OCI-LY7 (cell line): ENCODE measurements at regions of chr3 and their contacts with region 1.

Region 1: DNA sequence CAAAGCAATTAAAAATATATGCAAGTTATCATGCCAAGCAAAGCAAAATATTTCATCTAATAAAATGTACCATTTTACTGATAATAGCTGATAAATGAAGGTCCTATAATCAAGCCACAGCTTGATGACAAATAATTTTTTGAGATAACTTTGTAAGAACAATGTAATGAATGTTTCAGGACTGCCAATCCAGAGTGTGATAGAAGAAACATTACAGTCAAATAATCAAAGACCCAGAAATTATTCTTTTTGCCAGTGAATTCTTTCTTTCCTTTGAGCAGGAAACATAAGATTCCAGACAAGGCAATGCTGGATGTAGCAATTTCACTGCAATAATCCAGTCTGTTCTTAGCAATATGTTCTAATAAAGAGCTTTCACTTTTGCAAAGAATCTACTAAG is 556.1 kb downstream of the PLOD2 start:
- DNase-seq: no peak
- H3K4me3 ChIP-seq: no peak overlapping the region
- H3K27ac ChIP-seq: no peak overlapping the region
- H3K4me1 ChIP-seq: peaks cover 9% of the 10 kb centered on the region
- CTCF ChIP-seq: no peak

Region 2: GRCh38 chr3:145623349-145623748 is 18.5 kb after region 1 on chr3:
- CTCF ChIA-PET with region 1: no interaction called
- POLR2A ChIA-PET with region 1: interaction called, 23 read pairs
- intact Hi-C with region 1: no loop called
- DNase-seq: no peak
- H3K4me3 ChIP-seq: no peak overlapping the region
- H3K27ac ChIP-seq: no peak overlapping the region
- H3K4me1 ChIP-seq: peaks cover 45% of the 10 kb centered on the region
- CTCF ChIP-seq: no peak